Left cardiac atrium (tissue), 4 donors: ENCODE measurements at regions of chr12 and their contacts with region 1.

Region 1: DNA sequence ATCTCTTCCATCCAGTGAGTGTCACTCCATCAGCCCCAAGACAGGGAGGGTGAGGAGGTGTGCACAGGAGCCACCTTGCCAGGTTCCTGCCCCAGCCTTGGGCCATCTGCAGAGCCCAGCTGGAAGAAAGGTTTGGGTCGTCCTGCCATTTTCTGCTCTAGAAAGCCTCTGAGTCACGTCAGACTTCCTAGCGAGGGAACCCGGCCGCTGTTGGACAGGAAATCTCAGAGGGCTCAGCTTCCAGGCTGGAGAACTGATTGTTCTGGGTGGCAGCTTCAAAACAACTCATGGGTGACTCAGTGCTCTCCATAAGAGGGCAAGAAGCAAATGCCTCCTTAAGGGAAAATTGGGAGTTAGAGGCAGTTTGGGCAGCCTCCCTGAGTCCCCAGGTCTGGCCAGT is 16.6 kb downstream of the HIP1R start:
- DNase-seq: no peak
- ATAC-seq: peak; percentile 17 to 56

Region 2: GRCh38 chr12:122265931-122266771 is 585.7 kb before region 1 on chr12 and contains the start of gene VPS33A:
- intact Hi-C with region 1: no loop called
- DNase-seq: peak; percentile 97
- ATAC-seq: peak; percentile 98
- total RNA-seq, gene VPS33A: 9.1 to 10.7 TPM

Region 3: DNA sequence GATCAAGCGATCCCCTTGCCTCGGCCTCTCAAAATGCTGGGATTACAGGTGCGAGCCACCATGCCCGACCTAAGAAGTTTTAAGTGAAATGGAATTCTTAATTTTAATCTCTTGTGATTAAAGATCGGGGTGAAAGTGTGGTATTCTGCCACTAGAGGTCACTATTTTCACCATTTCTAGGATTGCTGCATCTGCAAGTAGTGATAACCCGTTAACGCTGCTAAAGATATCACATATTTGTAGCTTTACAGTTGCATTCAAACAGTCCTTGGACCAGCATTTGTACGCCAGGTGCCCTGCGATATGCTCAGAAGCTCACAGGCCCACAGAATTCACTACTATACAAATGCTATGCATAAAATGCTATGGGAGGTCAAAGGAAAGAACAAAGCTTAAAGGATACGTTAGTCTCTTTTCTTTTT is 58.1 kb before region 1 on chr12:
- intact Hi-C with region 1: loop called in 1 of 2 experiments (anchors 10 kb)
- DNase-seq: no peak
- ATAC-seq: peak in 1 of 2 donors; percentile 65